Ascending aorta (tissue), 2 donors: ENCODE measurements at regions of chr16 and their contacts with region 1.

Region 1: GRCh38 chr16:49855280-49855821 is 561 bp downstream of the ZNF423 start:
- DNase-seq: peak in 1 of 2 donors; percentile 89
- H3K4me3 ChIP-seq: peak overlapping the region; percentile 74 to 81
- H3K27ac ChIP-seq: peak overlapping the region; percentile 87 to 92
- H3K4me1 ChIP-seq: peaks cover 0 to 14% of the 10 kb centered on the region in 2 donors
- H3K27me3 ChIP-seq: no peaks in the 10 kb centered on the region
- CTCF ChIP-seq: no peak

Region 2: GRCh38 chr16:48609652-48610029 is 1245.7 kb before region 1 on chr16:
- intact Hi-C with region 1: loop called (anchors 10 kb)
- DNase-seq: no peak
- H3K4me3 ChIP-seq: peak overlapping the region; percentile 88 to 99
- H3K27ac ChIP-seq: peak overlapping the region; percentile 91 to 95
- H3K4me1 ChIP-seq: peaks cover 4 to 18% of the 10 kb centered on the region in 2 donors
- H3K27me3 ChIP-seq: no peaks in the 10 kb centered on the region
- CTCF ChIP-seq: no peak

Region 3: DNA sequence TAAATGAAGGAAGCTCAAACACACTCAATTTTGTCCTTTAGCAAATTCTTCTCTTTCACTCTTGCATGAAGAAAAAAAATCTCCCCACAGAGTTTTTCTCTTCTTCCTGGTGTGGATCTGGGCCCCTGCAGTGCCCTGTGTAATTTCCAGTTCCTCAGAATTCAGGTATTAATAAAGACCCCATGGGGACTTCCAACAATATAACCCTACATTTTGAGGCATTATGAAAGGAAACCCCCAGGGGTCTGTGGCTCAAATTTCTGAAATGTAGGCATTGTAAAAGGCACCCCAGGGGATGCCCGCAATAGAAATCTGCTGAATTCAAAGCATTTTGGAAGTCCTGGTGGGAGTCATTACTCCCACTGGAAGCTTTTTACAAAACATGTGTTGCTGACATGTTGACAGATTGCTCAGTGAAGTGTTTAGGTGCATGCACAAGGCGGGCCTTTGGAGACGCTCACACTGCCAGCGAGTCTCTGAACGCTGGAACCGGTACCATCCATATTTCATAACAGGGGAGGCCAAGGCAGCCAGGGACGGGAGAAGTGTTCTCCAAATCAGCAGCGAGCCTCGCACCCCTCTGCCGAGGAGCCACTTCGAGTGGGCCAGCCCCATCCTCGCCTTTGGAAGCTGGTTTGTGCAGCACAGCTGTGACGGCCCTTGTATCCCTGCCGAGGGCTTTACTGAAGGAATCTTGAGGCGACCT is 153.4 kb before region 1 on chr16:
- intact Hi-C with region 1: loop called (anchors 2 kb)
- DNase-seq: peak; percentile 18 to 80
- H3K4me3 ChIP-seq: peak overlapping the region in 1 of 2 donors; percentile 39
- H3K27ac ChIP-seq: peak overlapping the region; percentile 88 to 89
- H3K4me1 ChIP-seq: peaks cover 7 to 25% of the 10 kb centered on the region in 2 donors
- H3K27me3 ChIP-seq: no peaks in the 10 kb centered on the region
- CTCF ChIP-seq: no peak

Region 4: DNA sequence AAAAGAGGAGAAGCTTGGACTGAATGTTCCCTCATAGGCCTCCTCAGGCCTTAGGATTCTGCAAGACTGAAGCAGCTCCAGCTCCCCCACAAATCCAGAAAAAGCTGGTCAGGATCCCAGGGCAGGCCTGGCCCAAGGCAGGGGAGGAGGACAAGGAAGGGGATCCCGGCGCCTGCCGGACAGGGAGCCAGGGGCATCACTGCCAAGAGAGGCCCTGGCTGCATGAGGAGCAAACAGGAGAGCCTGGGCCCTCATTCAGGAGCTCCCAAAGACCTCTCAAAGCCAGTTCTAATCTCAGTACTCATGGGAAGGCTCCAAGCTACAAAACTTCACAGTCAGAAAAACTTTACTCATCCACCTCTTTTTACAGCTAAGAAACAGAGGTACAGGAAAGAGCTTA is 66.8 kb before region 1 on chr16:
- intact Hi-C with region 1: loop called (anchors 2 kb)
- DNase-seq: peak in 1 of 2 donors; percentile 68
- H3K4me3 ChIP-seq: no peak overlapping the region
- H3K27ac ChIP-seq: peak overlapping the region; percentile 76 to 78
- H3K4me1 ChIP-seq: peaks cover 0 to 19% of the 10 kb centered on the region in 2 donors
- H3K27me3 ChIP-seq: no peaks in the 10 kb centered on the region
- CTCF ChIP-seq: no peak

Region 5: GRCh38 chr16:49834531-49835151 is 20.7 kb before region 1 on chr16:
- intact Hi-C with region 1: loop called (anchors 2 kb)
- DNase-seq: peak; percentile 54 to 88
- H3K4me3 ChIP-seq: peak overlapping the region in 1 of 2 donors; percentile 23
- H3K27ac ChIP-seq: peak overlapping the region; percentile 86 to 90
- H3K4me1 ChIP-seq: peaks cover 48 to 74% of the 10 kb centered on the region in 2 donors
- H3K27me3 ChIP-seq: no peaks in the 10 kb centered on the region
- CTCF ChIP-seq: no peak

Region 6: DNA sequence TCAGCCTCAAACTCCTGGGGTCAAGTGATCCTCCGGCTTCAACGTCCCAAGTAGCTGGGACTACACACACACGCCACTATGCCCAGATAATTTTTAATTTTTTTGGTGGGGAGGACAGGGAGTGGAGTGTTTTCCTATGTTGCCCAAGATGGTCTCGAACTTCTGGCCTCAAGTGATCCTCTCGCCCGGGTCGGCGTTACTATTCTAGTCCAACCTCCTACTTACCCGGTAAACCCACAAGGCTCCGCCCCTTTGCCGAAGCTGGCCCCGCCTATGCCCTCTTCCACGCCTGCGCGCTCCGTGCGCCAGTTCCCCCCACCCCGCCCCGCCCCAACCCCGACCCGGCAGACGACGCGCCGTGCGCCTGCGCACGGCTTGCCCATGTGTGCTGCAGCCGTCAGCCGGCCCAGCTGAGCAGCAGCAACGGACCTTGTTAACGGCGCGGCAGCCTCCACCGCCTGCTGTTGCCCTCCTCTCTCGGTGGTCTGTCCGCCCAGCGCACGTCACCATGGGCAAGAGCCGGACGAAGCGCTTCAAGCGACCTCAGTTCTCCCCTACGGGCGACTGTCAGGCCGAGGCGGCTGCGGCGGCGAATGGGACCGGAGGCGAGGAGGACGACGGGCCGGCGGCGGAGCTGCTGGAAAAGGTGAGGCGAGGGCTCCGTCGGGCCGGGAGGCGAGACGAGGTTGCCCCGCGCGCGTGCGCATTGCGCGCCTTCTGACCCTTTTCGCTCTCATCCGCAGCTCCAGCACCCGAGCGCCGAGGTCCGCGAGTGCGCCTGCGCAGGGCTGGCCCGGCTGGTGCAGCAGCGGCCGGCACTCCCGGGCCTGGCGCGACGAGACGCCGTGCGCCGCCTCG is 210.5 kb after region 1 on chr16 and contains the start of gene HEATR3:
- intact Hi-C with region 1: loop called (anchors 5 kb)
- DNase-seq: peak; percentile 65 to 95
- H3K4me3 ChIP-seq: peak within 1 kb of the TSS; percentile 80 to 98
- H3K27ac ChIP-seq: peak within 1 kb of the TSS; percentile 90 to 92
- H3K4me1 ChIP-seq: peaks cover 4 to 20% of the 10 kb centered on the region in 2 donors
- H3K27me3 ChIP-seq: no peaks in the 10 kb centered on the region
- CTCF ChIP-seq: no peak
- total RNA-seq, gene HEATR3: 10.4 TPM